ENCODE measurements at regions of chr4 and their contacts with region 1.

Region 1: DNA sequence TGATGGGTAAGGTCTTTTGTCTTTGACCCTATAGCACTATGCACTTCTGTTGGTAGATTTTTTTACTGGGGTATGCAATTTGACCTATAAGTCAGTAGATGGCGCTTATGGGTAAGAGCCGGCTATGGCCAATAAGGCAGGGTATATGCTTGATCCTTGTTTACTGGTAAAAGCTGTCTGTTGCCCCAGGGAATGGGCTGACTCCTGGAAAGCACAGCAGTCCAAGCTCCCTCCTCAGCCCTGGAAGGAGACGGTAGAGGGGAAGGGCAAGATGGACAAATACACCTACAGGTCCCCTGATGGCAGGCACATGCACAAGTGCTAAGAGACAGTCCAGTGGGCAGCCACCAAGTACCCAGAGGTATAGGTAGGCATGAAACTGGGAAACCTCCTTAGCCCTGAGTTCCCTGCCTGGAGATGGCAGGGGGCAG is 63.7 kb downstream of the ADAMTS3 start:
- DNase-seq: no peak
- ATAC-seq: peak; percentile 49

Region 2: DNA sequence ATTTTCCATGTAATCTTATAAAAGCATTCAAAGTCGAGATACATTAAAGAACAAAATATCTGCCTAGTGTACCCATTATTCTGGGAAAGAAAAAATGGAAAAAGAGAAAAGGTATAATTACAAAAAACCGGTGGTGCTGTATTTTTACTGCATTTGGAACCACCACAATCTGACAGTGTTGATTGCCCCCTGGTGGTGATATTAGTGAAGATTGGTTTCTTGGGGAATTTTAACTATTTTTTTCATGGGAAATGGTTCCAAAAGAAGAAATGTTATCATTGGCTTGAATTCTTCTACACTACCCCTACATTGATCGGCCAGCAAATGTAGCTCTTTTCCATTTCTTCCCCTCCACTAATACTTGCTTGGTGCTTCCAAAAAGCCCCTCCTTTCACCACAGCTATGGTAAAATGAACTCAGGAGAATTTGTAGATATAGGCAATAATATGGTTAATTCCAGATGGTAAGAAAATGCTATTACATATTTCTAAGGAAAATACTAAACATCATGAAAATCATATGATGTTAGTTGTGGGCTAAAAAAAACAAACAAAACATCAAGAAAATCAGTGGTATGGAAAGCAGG is 514.2 kb after region 1 on chr4:
- intact Hi-C with region 1: loop called in 1 of 2 experiments (anchors 5 kb)
- DNase-seq: no peak
- ATAC-seq: no peak

Measured in left colon (tissue), 2 donors.